ENCODE measurements at regions of chr16 and their contacts with region 1.

Region 1: GRCh38 chr16:66894948-66895688 is 14.8 kb downstream of the PDP2 start:
- DNase-seq: peak; percentile 78
- H3K4me3 Mint-ChIP-seq: no peak overlapping the region
- H3K27ac Mint-ChIP-seq: peak overlapping the region; percentile 15
- H3K4me1 Mint-ChIP-seq: peaks cover 23% of the 10 kb centered on the region
- H3K27me3 Mint-ChIP-seq: no peaks in the 10 kb centered on the region

Region 2: DNA sequence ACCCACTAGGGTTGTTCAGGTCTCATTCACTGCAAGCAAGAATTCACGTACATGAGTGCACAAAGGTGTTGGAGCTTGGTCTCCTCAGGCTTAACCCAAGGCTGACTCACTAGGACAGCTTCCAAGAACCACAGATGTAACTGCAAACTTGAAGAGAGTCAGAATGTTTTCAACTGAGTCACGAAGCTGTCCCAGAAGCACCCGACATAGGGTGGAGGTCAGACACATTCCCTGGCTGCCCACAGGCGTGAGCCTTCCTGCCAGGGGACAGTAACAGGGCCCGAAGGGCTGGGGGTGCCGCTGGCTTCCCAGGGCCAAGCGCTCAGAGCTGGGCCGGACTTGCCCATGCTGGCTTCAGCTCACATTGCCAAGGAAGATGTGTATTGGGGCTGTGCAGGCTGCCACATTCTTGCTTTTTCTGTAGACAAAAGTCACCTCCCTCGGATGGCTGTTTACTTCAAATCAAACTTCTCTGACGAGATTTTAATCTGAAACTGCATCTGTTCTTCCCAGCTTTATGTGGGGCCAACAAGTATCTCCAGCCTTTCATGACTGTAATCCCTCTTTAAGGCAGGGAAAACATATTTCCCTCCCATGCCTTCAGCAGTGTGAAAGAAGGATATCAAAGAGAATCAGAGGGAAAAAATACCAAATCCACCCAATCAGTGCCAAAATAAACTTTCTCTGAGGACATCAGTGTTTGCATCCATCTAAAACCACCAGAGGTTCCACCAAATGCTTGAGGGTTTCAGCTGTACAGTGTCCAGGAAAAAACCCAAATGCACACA is 276.3 kb before region 1 on chr16:
- CTCF ChIA-PET with region 1: no interaction called
- POLR2A ChIA-PET with region 1: no interaction called
- DNase-seq: no peak
- H3K4me3 Mint-ChIP-seq: no peak overlapping the region
- H3K27ac Mint-ChIP-seq: no peak overlapping the region
- H3K4me1 Mint-ChIP-seq: no peaks in the 10 kb centered on the region
- H3K27me3 Mint-ChIP-seq: no peaks in the 10 kb centered on the region

Region 3: DNA sequence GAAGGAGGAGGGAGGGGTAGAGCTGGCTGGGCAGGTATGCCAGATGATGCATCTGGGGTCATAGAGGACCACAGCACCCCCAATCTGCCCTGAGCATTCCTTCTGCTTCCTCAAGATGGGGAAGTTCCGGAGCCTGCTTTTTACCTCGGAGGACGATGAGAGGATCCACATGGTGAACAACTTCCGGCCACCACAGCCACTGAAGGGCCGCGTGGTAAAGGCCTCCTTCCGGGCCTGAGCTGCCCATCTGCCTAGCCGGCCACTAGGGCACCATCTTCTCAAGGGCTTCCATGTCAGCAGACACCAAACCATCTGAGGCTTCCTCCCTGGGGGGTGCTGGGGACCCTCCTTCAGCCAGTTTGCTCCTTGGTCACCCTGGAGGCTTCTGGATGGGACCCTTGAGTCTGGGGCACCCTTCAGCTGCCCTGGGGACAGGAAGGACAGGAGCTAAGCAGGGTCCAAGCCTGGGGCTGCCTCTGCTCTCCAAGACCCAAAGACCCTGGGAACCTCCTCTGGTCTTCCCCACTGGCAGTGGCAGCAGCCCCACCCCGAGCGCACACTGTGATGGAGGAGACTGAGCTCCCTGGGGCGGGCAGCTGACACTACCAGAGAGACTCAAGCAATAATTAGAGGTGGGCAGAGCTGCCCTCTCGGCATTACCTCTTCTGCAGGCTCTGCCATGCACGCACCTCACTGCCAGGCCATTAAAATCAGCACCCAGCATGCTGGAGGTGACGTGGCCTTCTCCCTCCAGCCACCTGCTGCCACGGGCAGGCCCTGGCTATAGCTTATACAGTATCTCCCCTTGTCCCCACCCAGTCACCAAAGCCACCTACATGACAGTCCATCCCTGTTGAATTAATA is 41.6 kb before region 1 on chr16:
- CTCF ChIA-PET with region 1: no interaction called
- POLR2A ChIA-PET with region 1: no interaction called
- DNase-seq: no peak
- H3K4me3 Mint-ChIP-seq: no peak overlapping the region
- H3K27ac Mint-ChIP-seq: no peak overlapping the region
- H3K4me1 Mint-ChIP-seq: no peaks in the 10 kb centered on the region
- H3K27me3 Mint-ChIP-seq: peaks cover 3% of the 10 kb centered on the region

Region 4: DNA sequence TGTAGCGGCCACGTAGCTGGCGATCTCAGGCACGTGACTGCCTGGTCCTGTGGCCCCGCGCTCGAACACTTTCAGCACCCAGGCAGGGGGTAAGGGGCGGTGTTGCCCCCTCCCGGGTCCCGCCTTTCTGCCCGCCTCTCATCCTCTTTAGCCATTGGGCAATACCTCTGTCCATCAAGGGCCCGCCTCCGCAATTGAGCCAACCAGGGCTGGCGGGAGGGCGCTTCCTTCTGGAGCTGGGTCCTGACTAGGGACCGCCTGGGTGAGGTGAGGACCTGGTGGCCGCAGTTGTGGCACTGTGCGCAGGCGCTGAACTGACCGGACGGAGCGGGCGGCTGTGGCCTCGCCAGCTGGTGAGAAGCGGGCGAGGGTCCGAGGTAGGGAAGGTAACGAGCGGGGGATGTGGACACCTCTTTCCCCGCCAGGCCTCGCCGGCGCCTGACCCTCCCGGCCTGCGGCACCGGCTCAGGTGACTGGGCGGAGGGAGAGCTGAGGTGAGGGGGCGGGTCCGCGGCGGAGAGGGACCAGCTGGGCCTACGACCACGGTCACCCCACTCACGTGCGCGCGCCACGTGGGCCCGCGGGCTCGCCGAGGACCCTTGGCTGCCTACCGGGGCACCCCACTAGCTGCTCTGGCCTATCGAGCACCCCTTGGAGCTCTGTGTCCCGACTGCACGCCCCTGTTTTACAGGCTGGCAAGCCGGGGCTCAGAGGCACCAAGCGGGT is 14.7 kb before region 1 on chr16 and contains the start of gene PDP2:
- CTCF ChIA-PET with region 1: interaction called, 49 read pairs
- POLR2A ChIA-PET with region 1: no interaction called
- DNase-seq: peak; percentile 94
- H3K4me3 Mint-ChIP-seq: peak within 1 kb of the TSS; percentile 100
- H3K27ac Mint-ChIP-seq: peak within 1 kb of the TSS; percentile 94
- H3K4me1 Mint-ChIP-seq: peaks cover 48% of the 10 kb centered on the region
- H3K27me3 Mint-ChIP-seq: no peaks in the 10 kb centered on the region
- total RNA-seq, gene PDP2: 20.8 to 21.4 TPM

Region 5: DNA sequence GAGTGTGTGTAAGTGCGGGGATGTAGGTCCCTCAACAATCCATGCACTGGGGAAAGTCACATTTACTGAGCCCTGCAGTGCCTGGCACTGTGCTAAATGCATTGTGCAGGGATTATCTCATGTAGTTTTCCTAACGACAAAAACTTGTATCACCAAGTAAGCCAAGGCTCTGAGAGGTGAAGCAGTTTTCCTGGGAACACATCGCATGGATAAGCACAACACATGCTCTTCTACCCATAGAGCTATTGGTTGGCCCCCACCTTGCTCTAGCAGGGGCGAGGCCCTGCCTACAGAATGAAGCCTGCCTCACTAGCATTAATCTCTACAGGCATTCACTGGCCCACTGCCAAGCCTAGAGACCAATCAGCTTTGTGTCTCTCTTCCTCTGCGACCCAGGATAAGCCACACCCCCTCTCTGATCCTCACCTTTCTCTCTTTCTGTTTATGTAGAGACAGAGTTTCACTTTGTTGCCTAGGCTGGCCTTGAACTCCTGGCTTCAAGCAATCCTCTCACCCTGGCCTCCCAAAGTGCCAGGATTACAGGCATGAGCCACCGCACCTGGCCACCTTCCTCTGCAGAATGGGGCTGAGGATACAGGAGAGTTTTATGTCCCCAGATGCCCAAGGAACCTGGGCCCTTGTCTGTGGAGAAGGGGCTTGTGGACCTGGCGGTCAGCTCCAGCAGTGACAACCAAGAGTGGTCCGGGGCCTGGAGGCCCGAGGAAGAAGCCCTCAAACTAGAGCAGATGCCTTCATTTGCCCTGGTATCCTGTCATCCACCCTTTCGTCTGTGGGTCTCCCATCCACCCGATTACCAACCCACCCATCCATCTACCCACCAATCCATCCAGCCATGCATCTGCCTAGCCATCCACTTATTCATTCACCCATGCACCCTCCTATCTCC is 10.8 kb after region 1 on chr16:
- CTCF ChIA-PET with region 1: interaction called, 51 read pairs
- POLR2A ChIA-PET with region 1: no interaction called
- DNase-seq: peak; percentile 85
- H3K4me3 Mint-ChIP-seq: no peak overlapping the region
- H3K27ac Mint-ChIP-seq: peak overlapping the region; percentile 73
- H3K4me1 Mint-ChIP-seq: peaks cover 12% of the 10 kb centered on the region
- H3K27me3 Mint-ChIP-seq: peaks cover 2% of the 10 kb centered on the region

Region 6: GRCh38 chr16:66918803-66919568 is 23.9 kb after region 1 on chr16 and contains the start of gene CDH16:
- CTCF ChIA-PET with region 1: interaction called, 12 read pairs
- POLR2A ChIA-PET with region 1: no interaction called
- DNase-seq: no peak
- H3K4me3 Mint-ChIP-seq: no peak within 1 kb of the TSS
- H3K27ac Mint-ChIP-seq: no peak within 1 kb of the TSS
- H3K4me1 Mint-ChIP-seq: peaks cover 4% of the 10 kb centered on the region
- H3K27me3 Mint-ChIP-seq: peaks cover 24% of the 10 kb centered on the region
- total RNA-seq, gene CDH16: not detected

Region 7: GRCh38 chr16:66928702-66929388 is 33.7 kb after region 1 on chr16:
- CTCF ChIA-PET with region 1: interaction called, 11 read pairs
- POLR2A ChIA-PET with region 1: no interaction called
- DNase-seq: peak; percentile 45
- H3K4me3 Mint-ChIP-seq: no peak overlapping the region
- H3K27ac Mint-ChIP-seq: no peak overlapping the region
- H3K4me1 Mint-ChIP-seq: peaks cover 43% of the 10 kb centered on the region
- H3K27me3 Mint-ChIP-seq: peaks cover 20% of the 10 kb centered on the region

Measured in activated CD4-positive, alpha-beta T cell treated with anti-CD3 and anti-CD28 coated beads, Interleukin-2, amount 10 ng/mL, durations not matched to agents 7 days and 5 days (primary cell).